T-cell (primary cell): ENCODE measurements at regions of chr15 and their contacts with region 1.

Region 1: DNA sequence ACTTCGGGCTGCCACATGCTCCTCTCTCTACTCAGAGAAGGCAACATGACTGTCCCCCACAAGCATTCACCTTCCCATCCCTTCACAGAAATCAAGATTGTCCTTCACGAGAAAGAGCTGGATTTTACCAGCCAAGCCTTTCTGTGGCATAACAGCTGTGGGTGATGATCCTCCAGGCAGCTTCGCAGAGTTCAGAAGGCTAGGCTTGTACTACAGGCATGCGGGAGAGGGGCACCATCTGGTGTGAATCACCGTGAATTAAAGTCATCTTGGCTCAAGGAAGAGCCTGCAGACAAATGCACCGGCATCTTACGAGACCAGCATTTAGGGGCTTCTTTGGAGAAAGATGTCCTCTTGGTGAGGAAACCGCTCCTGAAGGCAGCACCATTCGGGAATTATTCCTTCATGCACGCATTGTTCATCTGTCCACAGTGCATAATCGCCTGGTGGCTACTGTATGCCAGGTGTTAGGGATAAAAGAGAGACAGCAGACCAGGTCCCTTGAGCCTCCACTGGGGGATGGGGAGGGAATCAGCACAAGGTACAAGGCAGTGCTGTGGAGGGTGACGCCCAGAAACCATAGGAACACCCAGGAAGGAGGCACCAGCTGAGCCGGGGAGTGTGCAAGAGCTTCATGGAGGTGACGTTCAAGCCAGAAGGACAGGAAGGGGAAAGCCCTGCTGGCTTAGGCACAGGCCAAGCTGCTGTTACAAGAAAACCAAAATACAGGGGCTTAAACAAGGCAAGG is 108.6 kb downstream of the TMEM266 start:
- DNase-seq: no peak
- ATAC-seq: no peak
- H3K4me3 ChIP-seq: no peak overlapping the region
- H3K4me3 Mint-ChIP-seq: no peak overlapping the region
- H3K27ac ChIP-seq: no peak overlapping the region
- H3K27ac Mint-ChIP-seq: no peak overlapping the region
- H3K4me1 ChIP-seq: no peaks in the 10 kb centered on the region
- H3K4me1 Mint-ChIP-seq: no peaks in the 10 kb centered on the region
- H3K27me3 ChIP-seq: peaks cover 0 to 28% of the 10 kb centered on the region in 2 experiments
- H3K27me3 Mint-ChIP-seq: peaks cover 4 to 5% of the 10 kb centered on the region in 2 donors

Region 2: GRCh38 chr15:76181705-76182107 is 13.3 kb after region 1 on chr15:
- CTCF ChIA-PET with region 1: no interaction called
- POLR2A ChIA-PET with region 1: no interaction called
- DNase-seq: peak in 1 of 35 experiments; percentile 10
- ATAC-seq: peak; percentile 31 to 65 (median 59)
- H3K4me3 ChIP-seq: no peak overlapping the region
- H3K4me3 Mint-ChIP-seq: peak overlapping the region in 2 of 3 donors; percentile 0 to 34
- H3K27ac ChIP-seq: no peak overlapping the region
- H3K27ac Mint-ChIP-seq: peak overlapping the region in 1 of 2 donors; percentile 1
- H3K4me1 ChIP-seq: peaks cover 0 to 6% of the 10 kb centered on the region in 2 experiments
- H3K4me1 Mint-ChIP-seq: peaks cover 8 to 10% (median 9%) of the 10 kb centered on the region in 3 donors
- H3K27me3 ChIP-seq: peaks cover 0 to 52% of the 10 kb centered on the region in 2 experiments
- H3K27me3 Mint-ChIP-seq: peaks cover 42 to 43% of the 10 kb centered on the region in 2 donors

Region 3: DNA sequence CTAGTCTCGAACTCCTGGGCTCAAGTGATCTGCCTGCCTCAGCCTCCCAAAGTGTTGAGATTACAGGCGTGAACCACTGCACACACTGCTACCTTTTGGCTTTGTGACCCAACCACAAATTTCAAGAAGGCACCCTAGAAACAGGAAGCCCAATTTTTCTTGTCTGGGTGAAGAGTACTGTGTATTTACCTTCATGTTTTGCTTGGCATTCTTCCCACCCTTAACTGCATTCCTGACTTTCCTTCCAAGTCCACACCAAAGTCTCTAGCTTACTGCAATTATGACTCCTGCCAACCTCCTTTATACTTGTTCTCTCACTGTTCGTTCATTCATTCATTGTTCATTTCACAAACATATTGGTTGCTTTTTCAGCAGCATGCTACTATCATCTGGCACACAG is 48.6 kb after region 1 on chr15:
- CTCF ChIA-PET with region 1: no interaction called
- POLR2A ChIA-PET with region 1: interaction called in 1 of 2 experiments, 12 read pairs
- DNase-seq: no peak
- ATAC-seq: no peak
- H3K4me3 ChIP-seq: no peak overlapping the region
- H3K4me3 Mint-ChIP-seq: no peak overlapping the region
- H3K27ac ChIP-seq: no peak overlapping the region
- H3K27ac Mint-ChIP-seq: no peak overlapping the region
- H3K4me1 ChIP-seq: no peaks in the 10 kb centered on the region
- H3K4me1 Mint-ChIP-seq: peaks cover 0 to 6% (median 3%) of the 10 kb centered on the region in 3 donors
- H3K27me3 ChIP-seq: no peaks in the 10 kb centered on the region
- H3K27me3 Mint-ChIP-seq: no peaks in the 10 kb centered on the region